ENCODE measurements at regions of chr1 and their contacts with region 1.

Region 1: GRCh38 chr1:151820940-151821339 is 10.7 kb downstream of the RORC start:
- DNase-seq: no peak

Region 2: DNA sequence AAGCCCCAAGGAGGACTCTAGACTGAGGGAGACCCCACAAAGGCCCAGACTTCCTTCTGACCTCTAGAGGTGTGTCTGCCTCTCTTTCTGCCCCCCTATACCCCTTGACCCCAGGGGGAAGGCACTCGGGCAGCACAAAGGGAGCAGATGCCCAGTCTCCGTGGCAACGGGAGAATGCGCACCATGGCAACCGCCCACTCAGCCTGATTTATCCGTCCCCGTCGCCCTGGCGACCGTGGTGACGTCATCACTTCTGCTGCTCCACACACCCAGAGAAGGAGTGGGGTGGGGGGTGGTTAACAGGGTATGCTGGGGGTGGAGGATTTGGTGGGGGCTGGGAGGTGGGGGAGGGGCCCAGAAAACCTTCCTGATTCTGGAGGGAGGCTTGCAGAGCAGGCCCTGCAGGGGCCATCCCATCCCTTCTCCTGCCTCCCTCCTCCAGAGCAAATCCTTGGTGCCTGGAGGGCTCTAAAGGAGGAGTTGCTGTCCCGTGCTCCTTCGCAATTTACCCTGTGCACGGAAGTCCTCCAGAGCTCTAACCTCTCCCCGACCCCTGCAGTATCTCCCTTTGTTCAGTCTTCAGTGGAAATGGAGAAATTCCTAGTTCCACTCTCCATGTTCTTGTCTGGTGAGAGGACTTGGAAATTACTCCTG is 110.6 kb before region 1 on chr1:
- intact Hi-C with region 1: no loop called
- DNase-seq: no peak

Region 3: DNA sequence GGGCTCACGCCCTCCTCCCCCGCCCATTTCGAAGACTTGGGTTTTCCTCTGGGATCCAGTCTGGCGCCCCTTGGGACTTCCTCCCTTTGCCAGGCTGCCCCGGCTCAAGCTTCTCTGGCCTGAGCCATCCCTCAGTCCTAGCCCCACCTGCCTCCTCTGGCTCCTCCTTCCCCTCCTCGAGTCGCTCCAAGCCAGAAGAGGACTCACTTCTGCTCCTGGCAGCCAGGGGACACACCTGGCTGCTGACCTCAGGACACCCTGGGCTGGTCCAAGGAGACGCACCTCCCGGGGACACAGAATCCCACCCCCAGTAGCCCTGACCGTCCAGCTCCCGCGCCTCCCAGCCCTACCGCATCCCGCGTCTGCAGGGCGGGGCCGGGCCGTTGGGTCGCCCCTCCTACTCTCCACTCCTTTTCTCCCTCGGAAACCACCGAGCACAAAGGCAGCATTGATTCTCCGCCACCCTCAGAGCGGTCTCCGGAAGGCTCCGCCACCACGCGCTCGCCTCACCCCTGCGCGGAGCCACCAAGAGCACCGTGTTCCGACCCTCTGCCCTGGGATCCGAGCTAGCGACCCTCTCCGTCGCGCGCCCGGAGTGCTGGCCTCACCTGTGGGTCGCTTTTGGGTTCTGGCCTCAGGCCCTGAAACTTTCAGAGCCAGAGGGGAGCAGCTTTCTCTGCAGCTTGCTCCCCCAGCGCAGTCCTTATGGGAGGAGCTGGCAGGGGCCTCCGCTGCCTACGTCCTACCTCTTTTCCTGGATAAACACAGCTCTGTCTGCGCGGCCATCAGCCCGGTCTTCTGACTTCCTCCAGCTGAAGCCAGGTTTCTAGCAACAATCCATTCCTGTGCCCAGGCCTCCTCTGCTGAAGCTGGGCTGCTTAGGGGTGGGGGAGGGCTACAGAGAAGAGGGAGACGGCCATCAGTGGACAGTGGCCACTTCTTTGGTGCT is 18.8 kb after region 1 on chr1 and contains the start of gene C2CD4D:
- intact Hi-C with region 1: loop called in 1 of 2 experiments (anchors 1 kb)
- DNase-seq: no peak
- total RNA-seq, gene C2CD4D: not detected

Measured in posterior vena cava (tissue), 2 donors.